ENCODE measurements at regions of chr4 and their contacts with region 1.

Region 1: DNA sequence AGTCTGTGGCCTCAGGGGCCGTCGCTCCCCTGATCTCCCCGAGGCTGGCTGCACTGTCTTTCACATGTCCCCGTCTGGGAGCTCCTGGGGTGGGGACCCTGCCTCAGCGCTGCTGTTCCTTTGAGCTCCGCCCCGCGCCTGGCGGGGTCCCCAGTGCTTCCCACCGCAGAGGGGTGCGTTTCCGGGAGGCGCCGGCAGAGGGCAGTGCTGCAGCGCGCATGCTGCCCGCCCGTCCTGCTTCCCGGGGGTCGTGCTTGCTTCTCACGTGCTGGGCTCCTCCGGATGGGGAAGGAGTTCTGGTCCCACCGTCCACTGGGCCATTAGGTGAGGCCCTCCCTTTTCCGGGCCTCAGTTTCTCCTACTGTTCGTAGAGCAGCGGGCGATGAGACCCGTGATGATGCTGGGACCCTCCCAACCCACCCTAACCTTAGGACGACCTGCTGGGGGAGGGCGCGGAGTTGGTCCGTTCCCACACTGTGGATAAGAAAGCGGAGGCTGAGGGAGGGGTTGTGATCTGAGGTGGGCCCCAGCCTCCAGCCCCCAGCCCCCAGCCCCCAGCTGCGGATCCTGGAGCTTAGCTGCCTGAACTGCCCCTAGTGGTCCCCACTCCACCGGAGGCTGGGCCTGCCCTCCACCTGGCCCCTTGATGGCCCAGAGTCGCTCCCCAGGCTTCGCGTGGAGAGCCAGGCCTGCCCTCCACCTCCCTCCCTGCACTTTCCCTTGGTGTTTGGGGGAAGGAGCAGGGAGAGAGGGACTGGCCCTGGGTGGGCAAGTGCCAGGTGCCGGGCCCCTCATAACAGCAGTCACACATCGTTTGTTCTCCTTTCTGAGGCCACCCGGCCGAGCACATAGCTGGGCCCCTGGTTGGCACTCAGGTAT is 15.3 kb downstream of the CPZ start:
- DNase-seq: peak; percentile 46
- H3K4me3 Mint-ChIP-seq: no peak overlapping the region
- H3K27ac Mint-ChIP-seq: no peak overlapping the region
- H3K4me1 Mint-ChIP-seq: no peaks in the 10 kb centered on the region
- H3K27me3 Mint-ChIP-seq: peaks cover 2% of the 10 kb centered on the region

Region 2: DNA sequence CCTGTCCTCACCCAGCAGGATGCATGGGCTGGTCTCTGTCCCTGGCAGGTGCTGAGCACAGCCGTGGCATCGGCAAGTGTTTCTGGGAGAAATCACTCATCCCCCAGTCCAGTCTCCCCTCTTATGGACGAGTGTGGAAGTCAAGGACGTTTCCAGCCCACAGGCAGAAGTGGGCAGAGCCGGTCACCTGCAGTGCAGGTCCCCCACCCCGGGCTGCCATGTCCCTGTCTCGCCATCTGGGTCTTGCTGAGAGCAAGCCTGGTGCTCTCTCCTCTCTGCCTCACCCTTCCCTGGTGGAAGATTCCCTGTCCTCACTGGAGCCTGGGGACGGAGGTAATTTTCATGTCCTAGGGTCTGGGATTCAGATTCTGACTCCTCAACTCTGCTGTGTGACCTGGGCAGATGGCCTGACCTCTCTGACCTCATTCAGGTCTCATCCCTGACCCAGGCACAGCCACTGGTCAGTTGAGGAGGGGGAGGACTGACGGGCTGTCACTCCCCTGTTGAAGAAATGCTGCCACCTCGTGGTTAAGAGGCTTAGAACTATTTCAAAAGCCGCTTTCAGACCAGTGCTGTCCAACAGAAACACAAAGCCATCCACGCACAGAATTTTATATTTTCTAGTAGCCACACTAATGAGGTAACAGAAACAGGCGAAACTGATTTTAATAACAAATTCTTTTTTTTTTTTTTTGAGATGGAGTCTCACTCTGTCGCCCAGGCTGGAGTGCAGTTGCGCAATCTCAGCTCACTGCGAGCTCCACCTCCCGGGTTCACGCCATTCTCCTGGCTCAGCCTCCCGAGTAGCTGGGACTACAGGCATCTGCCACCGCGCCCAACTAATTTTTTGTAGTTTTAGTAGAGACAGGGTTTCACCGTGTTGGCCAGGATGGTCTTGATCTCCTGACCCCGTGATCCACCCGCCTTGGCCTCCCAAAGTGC is 13.5 kb before region 1 on chr4:
- CTCF ChIA-PET with region 1: no interaction called
- POLR2A ChIA-PET with region 1: no interaction called
- intact Hi-C with region 1: no loop called
- DNase-seq: peak; percentile 31
- H3K4me3 Mint-ChIP-seq: no peak overlapping the region
- H3K27ac Mint-ChIP-seq: no peak overlapping the region
- H3K4me1 Mint-ChIP-seq: no peaks in the 10 kb centered on the region
- H3K27me3 Mint-ChIP-seq: peaks cover 24% of the 10 kb centered on the region

Region 3: GRCh38 chr4:8917868-8918783 is 310.3 kb after region 1 on chr4:
- CTCF ChIA-PET with region 1: interaction called, 12 read pairs
- POLR2A ChIA-PET with region 1: no interaction called
- intact Hi-C with region 1: loop called (anchors 10 kb)
- DNase-seq: peak; percentile 75
- H3K4me3 Mint-ChIP-seq: no peak overlapping the region
- H3K27ac Mint-ChIP-seq: no peak overlapping the region
- H3K4me1 Mint-ChIP-seq: no peaks in the 10 kb centered on the region
- H3K27me3 Mint-ChIP-seq: peaks cover 11% of the 10 kb centered on the region

Measured in activated CD4-positive, alpha-beta memory T cell treated with anti-CD3 and anti-CD28 coated beads for 36 hours (primary cell).